Activated CD8-positive, alpha-beta T cell treated with anti-CD3 and anti-CD28 coated beads, Interleukin-2, amount 10 ng/mL, durations not matched to agents 7 days and 5 days (primary cell): ENCODE measurements at regions of chr1 and their contacts with region 1.

Region 1: GRCh38 chr1:214648801-214649200 is 45.8 kb downstream of the CENPF start:
- DNase-seq: no peak
- ATAC-seq: no peak
- H3K4me3 Mint-ChIP-seq: no peak overlapping the region
- H3K27ac Mint-ChIP-seq: no peak overlapping the region
- H3K4me1 Mint-ChIP-seq: no peaks in the 10 kb centered on the region
- H3K27me3 Mint-ChIP-seq: no peaks in the 10 kb centered on the region

Region 2: GRCh38 chr1:214637722-214638458 is 10.9 kb before region 1 on chr1:
- CTCF ChIA-PET with region 1: interaction called, 30 read pairs
- POLR2A ChIA-PET with region 1: no interaction called
- DNase-seq: peak; percentile 40
- ATAC-seq: no peak
- H3K4me3 Mint-ChIP-seq: no peak overlapping the region
- H3K27ac Mint-ChIP-seq: no peak overlapping the region
- H3K4me1 Mint-ChIP-seq: peaks cover 20% of the 10 kb centered on the region
- H3K27me3 Mint-ChIP-seq: no peaks in the 10 kb centered on the region

Region 3: GRCh38 chr1:214777364-214777763 is 128.6 kb after region 1 on chr1:
- CTCF ChIA-PET with region 1: no interaction called
- POLR2A ChIA-PET with region 1: no interaction called
- DNase-seq: no peak
- ATAC-seq: no peak
- H3K4me3 Mint-ChIP-seq: no peak overlapping the region
- H3K27ac Mint-ChIP-seq: no peak overlapping the region
- H3K4me1 Mint-ChIP-seq: no peaks in the 10 kb centered on the region
- H3K27me3 Mint-ChIP-seq: no peaks in the 10 kb centered on the region